CD8-positive, alpha-beta T cell (primary cell): ENCODE measurements at regions of chr13 and their contacts with region 1.

Region 1: GRCh38 chr13:77729502-77730221 is 32.2 kb downstream of the SLAIN1 start:
- DNase-seq: peak in 2 of 9 experiments; percentile 10 to 34
- ATAC-seq: peak; percentile 46
- H3K4me3 ChIP-seq: no peak overlapping the region
- H3K4me3 Mint-ChIP-seq: peak overlapping the region; percentile 35
- H3K27ac ChIP-seq: no peak overlapping the region
- H3K27ac Mint-ChIP-seq: peak overlapping the region; percentile 66
- H3K4me1 ChIP-seq: peaks cover 5% of the 10 kb centered on the region
- H3K4me1 Mint-ChIP-seq: peaks cover 39% of the 10 kb centered on the region
- H3K27me3 ChIP-seq: no peaks in the 10 kb centered on the region
- H3K27me3 Mint-ChIP-seq: no peaks in the 10 kb centered on the region
- CTCF ChIP-seq: no peak

Region 2: DNA sequence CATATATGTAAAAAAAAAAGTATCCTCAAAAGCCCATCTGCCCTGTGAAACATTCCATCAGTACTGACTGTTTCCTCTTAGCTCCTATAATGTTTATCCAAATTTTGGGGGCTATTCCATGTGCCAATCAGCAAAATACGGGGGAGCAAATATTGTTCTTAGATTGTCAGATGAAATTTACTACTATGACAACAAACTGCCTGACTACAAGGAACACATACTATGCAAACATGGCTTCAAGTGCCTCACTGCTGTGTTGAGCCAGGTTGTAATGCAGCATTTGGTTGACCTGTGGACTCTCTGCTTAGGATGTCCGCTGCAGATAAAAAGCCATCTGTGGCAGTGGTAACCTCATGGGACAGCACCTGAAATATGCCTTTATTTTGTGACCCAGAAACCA is 292.4 kb before region 1 on chr13:
- CTCF ChIA-PET with region 1: no interaction called
- POLR2A ChIA-PET with region 1: no interaction called
- intact Hi-C with region 1: no loop called
- DNase-seq: no peak
- ATAC-seq: no peak
- H3K4me3 ChIP-seq: no peak overlapping the region
- H3K4me3 Mint-ChIP-seq: no peak overlapping the region
- H3K27ac ChIP-seq: no peak overlapping the region
- H3K27ac Mint-ChIP-seq: no peak overlapping the region
- H3K4me1 ChIP-seq: no peaks in the 10 kb centered on the region
- H3K4me1 Mint-ChIP-seq: no peaks in the 10 kb centered on the region
- H3K27me3 ChIP-seq: no peaks in the 10 kb centered on the region
- H3K27me3 Mint-ChIP-seq: no peaks in the 10 kb centered on the region
- CTCF ChIP-seq: no peak

Region 3: DNA sequence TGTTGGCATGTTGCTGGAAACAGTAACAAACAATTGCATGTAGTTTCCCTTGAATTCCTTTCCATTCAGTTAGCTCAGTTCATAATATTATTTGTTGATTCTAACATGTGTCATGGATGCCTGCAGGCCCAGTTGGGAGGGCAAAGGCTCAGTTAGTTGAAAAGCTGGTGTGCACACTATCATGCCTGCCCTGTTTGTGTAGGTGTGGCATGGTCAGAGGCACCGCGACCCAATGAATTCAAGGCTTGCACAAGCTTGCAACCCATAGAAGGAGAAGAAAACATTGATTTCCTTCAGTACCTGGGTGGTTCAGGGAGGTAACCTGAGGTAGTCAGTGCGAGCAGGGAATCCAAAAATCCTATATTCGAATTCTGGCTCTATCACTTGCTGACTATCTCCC is 124.5 kb before region 1 on chr13:
- CTCF ChIA-PET with region 1: no interaction called
- POLR2A ChIA-PET with region 1: no interaction called
- intact Hi-C with region 1: no loop called
- DNase-seq: no peak
- ATAC-seq: no peak
- H3K4me3 ChIP-seq: no peak overlapping the region
- H3K4me3 Mint-ChIP-seq: no peak overlapping the region
- H3K27ac ChIP-seq: no peak overlapping the region
- H3K27ac Mint-ChIP-seq: no peak overlapping the region
- H3K4me1 ChIP-seq: no peaks in the 10 kb centered on the region
- H3K4me1 Mint-ChIP-seq: no peaks in the 10 kb centered on the region
- H3K27me3 ChIP-seq: no peaks in the 10 kb centered on the region
- H3K27me3 Mint-ChIP-seq: peaks cover 3% of the 10 kb centered on the region
- CTCF ChIP-seq: no peak

Region 4: GRCh38 chr13:77715233-77715891 is 14.3 kb before region 1 on chr13:
- CTCF ChIA-PET with region 1: no interaction called
- POLR2A ChIA-PET with region 1: no interaction called
- intact Hi-C with region 1: loop called in 1 of 2 experiments (anchors 2 kb)
- DNase-seq: no peak
- ATAC-seq: no peak
- H3K4me3 ChIP-seq: no peak overlapping the region
- H3K4me3 Mint-ChIP-seq: no peak overlapping the region
- H3K27ac ChIP-seq: no peak overlapping the region
- H3K27ac Mint-ChIP-seq: peak overlapping the region; percentile 50
- H3K4me1 ChIP-seq: peaks cover 4% of the 10 kb centered on the region
- H3K4me1 Mint-ChIP-seq: peaks cover 62% of the 10 kb centered on the region
- H3K27me3 ChIP-seq: no peaks in the 10 kb centered on the region
- H3K27me3 Mint-ChIP-seq: no peaks in the 10 kb centered on the region
- CTCF ChIP-seq: no peak

Region 5: DNA sequence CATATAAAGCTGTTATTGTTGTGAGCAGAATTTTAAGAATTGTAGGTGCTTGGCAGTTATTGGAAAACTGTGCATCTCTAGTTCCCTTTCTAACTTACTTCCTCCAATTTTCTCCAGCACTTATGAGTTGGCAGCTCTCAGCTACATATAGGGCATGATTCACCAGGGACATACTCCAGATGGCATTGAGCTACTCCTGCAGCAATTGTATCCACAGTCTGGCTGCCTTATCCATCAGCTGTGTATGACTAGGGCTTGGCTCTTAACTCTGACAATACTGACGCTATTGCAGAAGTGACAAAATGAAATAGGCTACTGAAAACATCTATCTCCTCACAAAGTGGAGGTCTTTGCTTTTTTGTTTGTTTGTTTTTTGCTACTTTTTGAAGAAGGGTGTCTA is 597.0 kb after region 1 on chr13:
- CTCF ChIA-PET with region 1: no interaction called
- POLR2A ChIA-PET with region 1: no interaction called
- intact Hi-C with region 1: no loop called
- DNase-seq: no peak
- ATAC-seq: no peak
- H3K4me3 ChIP-seq: no peak overlapping the region
- H3K4me3 Mint-ChIP-seq: no peak overlapping the region
- H3K27ac ChIP-seq: no peak overlapping the region
- H3K27ac Mint-ChIP-seq: no peak overlapping the region
- H3K4me1 ChIP-seq: no peaks in the 10 kb centered on the region
- H3K4me1 Mint-ChIP-seq: no peaks in the 10 kb centered on the region
- H3K27me3 ChIP-seq: no peaks in the 10 kb centered on the region
- H3K27me3 Mint-ChIP-seq: no peaks in the 10 kb centered on the region
- CTCF ChIP-seq: no peak